WTC11 (cell line): ENCODE measurements at regions of chr21 and their contacts with region 1.

Region 1: GRCh38 chr21:30515681-30516080 is 13.7 kb upstream of the KRTAP19-5 start:
- DNase-seq: no peak
- ATAC-seq: 0 out of 2 replicates have a peak, but pooled peaks have one; percentile 34
- H3K4me3 Mint-ChIP-seq: no peak overlapping the region
- H3K27ac Mint-ChIP-seq: no peak overlapping the region
- H3K4me1 Mint-ChIP-seq: peaks cover 14% of the 10 kb centered on the region
- H3K27me3 Mint-ChIP-seq: no peaks in the 10 kb centered on the region; the same call in 1 of the 2 replicates
- CTCF ChIP-seq: no peak

Region 2: DNA sequence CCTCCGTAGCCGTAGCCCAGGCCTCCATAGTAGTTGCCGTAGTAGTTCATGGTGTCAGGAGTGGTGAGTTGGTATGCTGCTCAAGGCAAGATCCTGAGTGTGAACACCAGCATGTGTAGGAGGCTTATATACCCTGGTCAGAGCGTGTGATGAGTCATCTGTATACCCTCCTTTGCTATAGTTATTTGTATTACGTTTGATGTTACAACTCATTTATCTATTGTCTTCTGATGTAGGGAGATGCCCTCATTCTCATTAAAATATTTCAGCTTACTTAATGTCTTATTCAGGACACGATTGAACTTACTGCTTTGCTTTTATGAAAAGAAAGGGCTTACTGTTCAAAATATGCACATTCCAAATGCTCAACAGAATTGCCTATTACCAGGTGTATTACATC is 13.6 kb before region 1 on chr21 and contains the start of gene KRTAP19-5:
- CTCF ChIA-PET with region 1: interaction called, 11 read pairs
- POLR2A ChIA-PET with region 1: no interaction called
- DNase-seq: no peak
- ATAC-seq: no peak
- H3K4me3 Mint-ChIP-seq: no peak within 1 kb of the TSS
- H3K27ac Mint-ChIP-seq: no peak within 1 kb of the TSS
- H3K4me1 Mint-ChIP-seq: 0 out of 2 replicates have a peak, but pooled peaks cover 3% of the 10 kb centered on the region
- H3K27me3 Mint-ChIP-seq: no peaks in the 10 kb centered on the region
- CTCF ChIP-seq: no peak
- total RNA-seq, gene KRTAP19-5: not detected in 3 replicates

Region 3: DNA sequence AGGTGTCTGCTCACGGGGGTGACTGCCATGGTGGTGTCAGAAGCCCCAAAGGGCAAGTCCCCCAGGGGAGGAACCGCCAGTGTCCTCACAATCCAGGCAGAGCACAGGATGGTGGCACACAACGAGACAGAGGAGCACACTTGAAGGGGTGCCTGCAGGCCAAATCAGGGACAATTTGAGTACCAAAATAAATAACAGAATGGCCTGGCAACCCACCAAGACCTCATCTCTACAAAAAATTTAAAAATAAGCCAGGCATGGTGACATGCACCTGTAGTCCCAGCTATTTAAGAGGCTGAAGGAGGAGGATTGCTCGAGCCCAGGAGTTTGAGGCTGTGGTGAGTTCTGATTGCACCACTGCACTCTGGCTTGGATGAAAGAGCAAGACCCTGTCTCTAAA is 790.2 kb after region 1 on chr21:
- CTCF ChIA-PET with region 1: no interaction called
- POLR2A ChIA-PET with region 1: no interaction called
- DNase-seq: no peak
- ATAC-seq: no peak
- H3K4me3 Mint-ChIP-seq: no peak overlapping the region
- H3K27ac Mint-ChIP-seq: no peak overlapping the region
- H3K4me1 Mint-ChIP-seq: peaks cover 26% of the 10 kb centered on the region
- H3K27me3 Mint-ChIP-seq: no peaks in the 10 kb centered on the region
- CTCF ChIP-seq: no peak